ENCODE measurements at regions of chr11 and their contacts with region 1.

Region 1: GRCh38 chr11:122642472-122642922 is 13.0 kb upstream of the UBASH3B start:
- DNase-seq: peak; percentile 95
- ATAC-seq: peak; percentile 90
- H3K4me3 ChIP-seq: no peak overlapping the region
- H3K27ac ChIP-seq: peak overlapping the region; percentile 42
- H3K4me1 ChIP-seq: peaks cover 15% of the 10 kb centered on the region
- H3K27me3 ChIP-seq: no peaks in the 10 kb centered on the region
- CTCF ChIP-seq: no peak
- POLR2A ChIP-seq: peak; percentile 64
- RAD21 ChIP-seq: no peak

Region 2: GRCh38 chr11:122617297-122617696 is 25.2 kb before region 1 on chr11:
- CTCF ChIA-PET with region 1: no interaction called
- POLR2A ChIA-PET with region 1: no interaction called
- dilution Hi-C with region 1: no loop called
- in situ Hi-C with region 1: no loop called
- intact Hi-C with region 1: no loop called
- DNase-seq: peak; percentile 4
- ATAC-seq: no peak
- H3K4me3 ChIP-seq: no peak overlapping the region
- H3K27ac ChIP-seq: no peak overlapping the region
- H3K4me1 ChIP-seq: no peaks in the 10 kb centered on the region
- H3K27me3 ChIP-seq: peaks cover 25% of the 10 kb centered on the region
- CTCF ChIP-seq: no peak
- POLR2A ChIP-seq: no peak
- RAD21 ChIP-seq: no peak

Region 3: DNA sequence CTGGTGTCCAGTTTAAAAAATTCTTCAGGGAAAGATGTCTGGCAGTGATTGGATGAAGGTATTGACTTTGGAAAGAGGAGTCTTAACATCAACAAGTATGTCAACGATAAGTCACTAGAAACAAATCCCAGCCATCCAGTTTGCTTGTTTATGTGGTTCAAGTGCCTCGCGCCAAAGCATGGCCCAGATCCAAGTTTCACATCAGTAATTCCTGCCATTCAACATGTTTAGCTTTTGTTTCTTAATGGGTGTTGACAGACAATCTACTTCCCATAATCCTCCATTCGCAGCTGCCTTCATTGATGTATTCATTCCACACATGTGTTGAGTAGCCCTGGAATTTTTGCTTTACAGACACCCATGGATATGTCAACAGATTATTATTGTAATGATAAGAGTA is 90.8 kb after region 1 on chr11:
- CTCF ChIA-PET with region 1: no interaction called
- POLR2A ChIA-PET with region 1: no interaction called
- dilution Hi-C with region 1: no loop called
- in situ Hi-C with region 1: no loop called
- intact Hi-C with region 1: loop called (anchors 5 kb)
- DNase-seq: peak; percentile 92
- ATAC-seq: peak; percentile 36
- H3K4me3 ChIP-seq: no peak overlapping the region
- H3K27ac ChIP-seq: no peak overlapping the region
- H3K4me1 ChIP-seq: peaks cover 17% of the 10 kb centered on the region
- H3K27me3 ChIP-seq: no peaks in the 10 kb centered on the region
- CTCF ChIP-seq: no peak
- POLR2A ChIP-seq: no peak
- RAD21 ChIP-seq: no peak

Region 4: GRCh38 chr11:122981388-122982264 is 339.1 kb after region 1 on chr11 and contains the start of gene BSX:
- CTCF ChIA-PET with region 1: no interaction called
- POLR2A ChIA-PET with region 1: no interaction called
- dilution Hi-C with region 1: no loop called
- in situ Hi-C with region 1: no loop called
- intact Hi-C with region 1: no loop called
- DNase-seq: peak; percentile 17
- ATAC-seq: peak; percentile 86
- H3K4me3 ChIP-seq: no peak within 1 kb of the TSS
- H3K27ac ChIP-seq: no peak within 1 kb of the TSS
- H3K4me1 ChIP-seq: no peaks in the 10 kb centered on the region
- H3K27me3 ChIP-seq: peaks cover 79% of the 10 kb centered on the region
- CTCF ChIP-seq: no peak
- POLR2A ChIP-seq: no peak
- RAD21 ChIP-seq: no peak
- total RNA-seq, gene BSX: not detected in 2 replicates

Measured in IMR-90 (cell line).